ENCODE measurements at regions of chr15 and their contacts with region 1.

Region 1: DNA sequence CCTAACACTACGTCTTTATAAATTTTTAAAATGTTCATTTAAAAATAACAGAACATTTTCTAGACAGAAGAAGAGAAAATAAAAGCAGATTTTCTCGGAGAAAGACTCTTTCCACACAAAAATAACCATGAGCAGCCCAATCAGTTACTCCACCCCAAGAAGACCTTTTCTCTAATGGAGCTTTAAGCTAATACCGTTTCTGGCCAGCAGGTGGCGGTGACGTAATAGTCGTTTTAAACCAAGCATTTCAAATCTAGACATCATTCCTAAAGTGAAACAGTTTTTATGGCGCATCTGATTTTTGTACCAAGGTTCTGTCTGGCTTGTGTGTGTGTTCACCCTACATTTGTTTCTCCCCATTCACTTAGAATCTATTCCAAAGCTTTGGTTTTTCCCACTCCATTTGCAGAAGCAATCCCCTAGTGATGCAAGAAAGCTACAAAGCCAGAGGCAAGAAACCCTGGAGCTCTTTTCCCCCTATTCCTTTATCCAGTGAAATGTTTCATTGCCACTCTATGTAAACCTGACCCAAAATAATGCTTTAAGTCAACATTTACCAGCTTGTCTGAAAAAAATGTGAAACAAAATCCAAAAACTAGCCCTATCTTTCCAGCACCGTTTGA is 336.7 kb upstream of the IGF1R start:
- DNase-seq: peak; percentile 63
- CTCF ChIP-seq: peak; percentile 78

Region 2: GRCh38 chr15:98421419-98422129 is 109.9 kb after region 1 on chr15:
- CTCF ChIA-PET with region 1: interaction called, 45 read pairs
- POLR2A ChIA-PET with region 1: no interaction called
- DNase-seq: peak; percentile 77
- CTCF ChIP-seq: peak; percentile 87

Region 3: GRCh38 chr15:98428253-98428989 is 116.7 kb after region 1 on chr15:
- CTCF ChIA-PET with region 1: interaction called, 37 read pairs
- POLR2A ChIA-PET with region 1: no interaction called
- DNase-seq: peak; percentile 81
- CTCF ChIP-seq: peak; percentile 79

Measured in GM10248 (cell line).